ENCODE measurements at regions of chr2 and their contacts with region 1.

Region 1: GRCh38 chr2:171293661-171294060 is 133.0 kb upstream of the TLK1 start:
- DNase-seq: peak; percentile 10
- ATAC-seq: no peak
- H3K4me3 ChIP-seq: no peak overlapping the region
- H3K27ac ChIP-seq: no peak overlapping the region
- H3K4me1 ChIP-seq: no peaks in the 10 kb centered on the region
- H3K27me3 ChIP-seq: no peaks in the 10 kb centered on the region
- CTCF ChIP-seq: no peak

Region 2: GRCh38 chr2:171307560-171307959 is 13.9 kb after region 1 on chr2:
- CTCF ChIA-PET with region 1: no interaction called
- POLR2A ChIA-PET with region 1: no interaction called
- intact Hi-C with region 1: no loop called
- DNase-seq: peak; percentile 16
- ATAC-seq: no peak
- H3K4me3 ChIP-seq: no peak overlapping the region
- H3K27ac ChIP-seq: no peak overlapping the region
- H3K4me1 ChIP-seq: peaks cover 6% of the 10 kb centered on the region; the same call in 1 of the 2 replicates
- H3K27me3 ChIP-seq: no peaks in the 10 kb centered on the region
- CTCF ChIP-seq: no peak

Region 3: GRCh38 chr2:171791361-171791760 is 497.7 kb after region 1 on chr2:
- CTCF ChIA-PET with region 1: no interaction called
- POLR2A ChIA-PET with region 1: interaction called, 11 read pairs
- intact Hi-C with region 1: no loop called
- DNase-seq: no peak
- ATAC-seq: no peak
- H3K4me3 ChIP-seq: no peak overlapping the region
- H3K27ac ChIP-seq: no peak overlapping the region
- H3K4me1 ChIP-seq: no peaks in the 10 kb centered on the region
- H3K27me3 ChIP-seq: no peaks in the 10 kb centered on the region
- CTCF ChIP-seq: no peak

Measured in PC-3 (cell line).